Mucosa of descending colon (tissue), 3 donors: ENCODE measurements at regions of chr12 and their contacts with region 1.

Region 1: GRCh38 chr12:114508529-114509129 is 102.7 kb upstream of the TBX5 start:
- DNase-seq: peak in 2 of 3 donors; percentile 42 to 88
- ATAC-seq: peak; percentile 59
- H3K4me3 ChIP-seq: no peak overlapping the region
- H3K4me1 ChIP-seq: no peaks in the 10 kb centered on the region
- CTCF ChIP-seq: peak; percentile 45

Region 2: DNA sequence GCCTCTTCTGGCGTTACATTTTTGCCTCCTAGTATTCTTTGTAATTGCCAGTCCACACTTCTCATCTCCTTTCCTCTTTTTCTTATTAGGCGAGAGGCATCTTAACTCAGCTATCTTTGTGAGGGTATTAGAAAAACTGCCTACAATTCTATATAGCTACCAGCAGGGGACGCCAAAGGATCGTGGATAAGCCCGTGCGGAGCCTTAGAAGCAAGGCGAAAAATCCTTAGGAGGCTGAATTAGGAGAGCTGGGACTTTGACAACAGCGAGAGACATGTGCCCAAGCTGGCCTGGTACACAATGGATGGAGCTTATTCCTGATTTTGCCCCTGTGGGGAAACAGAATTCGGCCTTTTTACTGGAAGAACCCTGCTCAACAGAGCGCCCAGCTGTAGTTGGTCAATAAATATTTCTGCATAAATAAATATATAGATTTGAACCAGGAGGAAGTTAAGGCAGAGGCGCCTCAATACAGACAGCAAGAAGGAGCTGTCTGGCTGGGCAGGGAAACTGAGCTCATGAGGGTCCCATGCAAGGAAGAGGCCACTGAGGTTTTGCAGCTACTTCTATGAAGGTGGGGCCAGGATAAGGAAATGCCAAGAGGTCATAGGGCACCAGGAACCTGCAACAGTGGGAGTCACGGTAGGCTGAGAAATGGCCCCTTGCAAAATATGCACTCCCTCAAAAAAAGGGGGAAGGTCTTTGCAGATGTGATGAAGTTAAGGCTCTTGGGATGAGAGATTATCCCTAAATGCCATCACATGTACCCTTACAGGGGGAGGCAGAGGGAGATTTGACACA is 527.9 kb before region 1 on chr12:
- intact Hi-C with region 1: loop called in 1 of 2 experiments (anchors 5 kb)
- DNase-seq: peak in 2 of 3 donors; percentile 12 to 41
- ATAC-seq: peak; percentile 85
- H3K4me3 ChIP-seq: no peak overlapping the region
- H3K4me1 ChIP-seq: no peaks in the 10 kb centered on the region
- CTCF ChIP-seq: peak; percentile 76

Region 3: DNA sequence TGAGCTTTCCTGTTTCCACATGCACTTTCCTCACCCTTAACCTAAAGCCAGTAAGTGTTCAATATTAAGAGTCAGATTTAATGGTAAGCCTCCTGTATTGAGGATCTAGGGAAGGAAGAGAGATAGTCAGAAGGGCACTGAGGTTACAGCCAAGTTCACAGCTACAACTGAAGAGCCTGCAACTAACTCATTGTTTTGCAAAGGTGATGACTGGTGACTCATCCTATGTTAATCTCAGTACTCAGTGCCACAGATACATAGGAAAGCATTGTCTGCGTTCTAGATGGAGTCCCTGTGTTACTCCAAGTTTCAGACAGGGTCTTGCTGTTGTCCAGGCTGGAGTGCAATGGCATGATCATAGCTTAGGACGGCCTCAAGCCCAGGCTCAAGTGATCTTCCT is 385.5 kb before region 1 on chr12:
- intact Hi-C with region 1: no loop called
- DNase-seq: no peak
- ATAC-seq: no peak
- H3K4me3 ChIP-seq: no peak overlapping the region
- H3K4me1 ChIP-seq: no peaks in the 10 kb centered on the region
- CTCF ChIP-seq: no peak

Region 4: DNA sequence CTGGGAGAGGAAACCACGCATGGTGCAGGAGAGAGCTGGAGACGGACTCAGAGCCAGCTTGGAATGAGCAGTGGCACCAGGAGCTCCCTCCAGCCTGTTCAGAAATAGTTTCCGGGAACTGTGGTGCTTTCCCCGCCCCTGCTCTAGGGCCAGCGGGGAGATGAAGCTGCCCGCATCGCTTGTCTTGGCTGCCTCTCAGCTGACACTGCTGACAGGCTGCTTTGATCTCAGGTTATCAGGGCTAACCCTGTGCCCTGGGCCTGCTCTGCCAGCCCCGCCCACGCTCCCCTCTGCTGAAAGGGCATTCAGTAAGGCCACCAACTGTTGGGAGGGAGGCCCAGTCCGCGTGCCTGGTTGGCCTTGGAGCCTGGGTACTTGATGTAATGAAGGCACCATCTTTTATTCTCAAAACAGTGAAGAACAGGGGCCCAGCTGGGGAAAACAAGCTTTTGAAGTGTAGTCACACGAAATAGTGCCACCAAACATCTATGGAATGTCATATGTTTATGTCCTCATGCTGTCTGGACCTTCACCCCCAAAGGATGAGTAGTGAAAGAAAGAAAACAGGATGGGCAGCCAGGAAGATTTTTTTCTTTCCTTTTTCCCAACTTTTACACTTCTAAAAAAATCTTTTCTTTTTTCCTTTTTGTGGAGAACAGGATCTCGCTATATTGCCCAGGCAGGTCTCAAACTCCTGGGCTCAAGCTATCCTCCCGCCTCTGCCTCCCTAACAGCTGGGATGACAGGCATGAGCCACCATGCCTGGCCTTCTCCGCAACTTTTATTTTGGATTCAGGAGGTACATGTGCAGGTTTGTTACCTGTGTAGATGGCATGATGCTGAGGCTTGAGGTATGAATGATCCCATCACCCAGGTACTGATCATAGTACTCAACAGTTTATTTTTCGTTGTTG is 291.2 kb after region 1 on chr12:
- intact Hi-C with region 1: no loop called
- DNase-seq: peak in 2 of 3 donors; percentile 37 to 43
- ATAC-seq: peak; percentile 83
- H3K4me3 ChIP-seq: no peak overlapping the region
- H3K4me1 ChIP-seq: peaks cover 5% of the 10 kb centered on the region
- CTCF ChIP-seq: no peak